Esophagus muscularis mucosa (tissue), 4 donors: ENCODE measurements at regions of chr9 and their contacts with region 1.

Region 1: DNA sequence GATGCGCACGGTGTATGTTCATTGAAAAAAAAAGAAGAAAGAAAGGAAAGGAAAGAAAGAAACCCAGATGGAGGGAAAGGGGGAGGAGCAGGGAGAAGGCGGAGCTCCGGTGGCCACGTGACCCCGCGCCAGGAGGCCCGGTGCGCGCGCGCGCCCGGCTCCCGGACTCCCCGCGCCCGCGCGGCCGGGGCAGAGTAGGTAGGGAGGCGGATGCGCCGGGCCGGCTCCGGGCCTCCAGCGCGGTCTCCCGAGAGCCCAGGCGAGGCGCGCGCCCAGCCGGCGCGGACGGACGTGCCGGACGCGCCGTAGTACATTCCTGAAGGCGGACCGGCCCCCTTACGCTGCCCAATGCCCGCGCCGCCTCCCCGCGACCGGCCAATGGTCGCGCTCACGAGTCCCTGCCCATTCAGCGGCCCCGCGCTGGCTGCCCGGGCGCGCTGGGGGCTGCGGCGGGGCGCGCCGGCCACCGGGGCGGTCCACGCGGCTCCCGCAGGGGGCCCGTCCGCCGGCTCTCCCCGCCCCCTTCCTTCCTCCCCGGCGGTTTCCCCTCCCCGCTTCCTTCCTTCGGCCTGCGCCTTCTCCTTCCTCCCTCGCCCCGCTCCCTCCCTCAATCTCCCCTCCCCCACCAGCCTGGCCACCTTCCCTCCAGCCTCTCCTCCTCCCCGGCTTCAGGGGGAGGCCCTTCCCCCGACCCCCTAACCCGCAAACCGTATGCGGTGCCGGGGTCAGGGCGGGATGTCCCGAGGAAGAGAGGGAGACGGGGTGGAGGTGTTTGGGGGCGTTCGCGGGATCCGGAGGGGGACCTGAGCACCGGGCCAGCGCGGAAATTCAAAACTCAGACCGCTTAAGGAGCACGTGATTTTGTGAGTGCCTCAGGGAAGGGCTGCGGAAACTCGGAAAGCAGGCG is 5.8 kb downstream of the PTCH1 start:
- DNase-seq: no peak
- H3K4me3 ChIP-seq: peak overlapping the region; percentile 80 to 94 (median 88)
- H3K27ac ChIP-seq: peak overlapping the region; percentile 87 to 94 (median 94)
- H3K4me1 ChIP-seq: peaks cover 27 to 34% (median 33%) of the 10 kb centered on the region in 4 donors
- H3K27me3 ChIP-seq: peaks cover 0 to 14% (median 5%) of the 10 kb centered on the region in 4 donors
- CTCF ChIP-seq: no peak
- EP300 ChIP-seq: no peak
- POLR2A ChIP-seq: peak; percentile 33

Region 2: GRCh38 chr9:95317119-95317892 is 193.7 kb before region 1 on chr9 and contains the start of gene FANCC:
- intact Hi-C with region 1: loop called (anchors 1 kb)
- DNase-seq: peak; percentile 96
- H3K4me3 ChIP-seq: peak within 1 kb of the TSS; percentile 73 to 100 (median 96)
- H3K27ac ChIP-seq: peak within 1 kb of the TSS; percentile 95 to 99 (median 97)
- H3K4me1 ChIP-seq: peaks cover 6 to 30% (median 19%) of the 10 kb centered on the region in 4 donors
- H3K27me3 ChIP-seq: no peaks in the 10 kb centered on the region
- CTCF ChIP-seq: no peak
- EP300 ChIP-seq: peak; percentile 32
- POLR2A ChIP-seq: peak; percentile 21
- total RNA-seq, gene FANCC: 5.3 to 9.5 (median 6.8) TPM